ENCODE measurements at regions of chr2 and their contacts with region 1.

Region 1: GRCh38 chr2:181536730-181537129 is 79.5 kb downstream of the ITGA4 start:
- DNase-seq: no peak
- ATAC-seq: no peak
- H3K4me3 Mint-ChIP-seq: no peak overlapping the region
- H3K27ac Mint-ChIP-seq: no peak overlapping the region
- H3K4me1 Mint-ChIP-seq: no peaks in the 10 kb centered on the region
- H3K27me3 Mint-ChIP-seq: no peaks in the 10 kb centered on the region
- CTCF ChIP-seq: no peak

Region 2: DNA sequence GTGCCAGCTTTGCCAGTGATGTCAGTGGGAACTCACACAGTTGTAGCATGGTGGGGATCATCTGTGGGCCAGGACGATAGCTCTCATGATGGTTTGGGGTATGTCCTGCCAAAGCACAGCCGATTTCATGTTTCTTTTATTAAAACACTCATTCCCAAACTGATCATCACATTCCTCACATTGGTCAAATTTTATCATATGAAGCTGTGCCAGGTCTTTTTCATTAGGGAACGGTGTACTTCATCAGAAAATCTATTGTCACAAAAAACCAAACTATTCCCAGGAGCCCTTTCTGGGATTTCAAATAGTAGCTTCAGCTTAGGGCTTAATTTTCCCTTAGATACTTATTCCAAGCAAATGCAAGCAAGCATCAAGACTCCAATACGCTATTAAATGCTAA is 37.5 kb before region 1 on chr2:
- CTCF ChIA-PET with region 1: no interaction called
- POLR2A ChIA-PET with region 1: no interaction called
- intact Hi-C with region 1: loop called (anchors 5 kb)
- DNase-seq: no peak
- ATAC-seq: no peak
- H3K4me3 Mint-ChIP-seq: no peak overlapping the region
- H3K27ac Mint-ChIP-seq: peak overlapping the region; percentile 10
- H3K4me1 Mint-ChIP-seq: no peaks in the 10 kb centered on the region
- H3K27me3 Mint-ChIP-seq: no peaks in the 10 kb centered on the region
- CTCF ChIP-seq: no peak

Measured in activated B cell treated with CpG ODN at 0.5 μM for 24 hours (primary cell).